ENCODE measurements at regions of chr1 and their contacts with region 1.

Region 1: DNA sequence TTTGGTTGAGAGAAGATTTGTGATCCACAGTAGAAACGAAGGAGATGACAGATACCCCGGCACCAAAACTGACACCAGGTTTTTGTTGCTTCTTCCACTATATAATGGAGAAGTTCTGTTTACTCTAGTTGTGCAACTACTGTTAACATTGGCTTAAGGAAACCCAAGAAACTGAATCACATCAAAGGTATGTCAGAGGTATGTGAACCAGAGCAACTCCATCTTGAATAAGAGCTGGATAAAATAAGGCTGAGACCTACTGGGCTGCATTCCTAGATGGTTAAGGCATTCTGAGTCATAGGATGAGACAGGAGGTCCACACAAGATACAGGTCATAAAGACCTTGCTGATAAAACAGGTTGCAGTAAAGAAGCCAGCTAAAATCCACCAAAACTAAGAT is 173.7 kb upstream of the CAMK1G start:
- DNase-seq: peak; percentile 95
- ATAC-seq: peak; percentile 65
- H3K4me3 ChIP-seq: no peak overlapping the region
- H3K27ac ChIP-seq: no peak overlapping the region
- H3K4me1 ChIP-seq: peaks cover 14% of the 10 kb centered on the region
- H3K27me3 ChIP-seq: no peaks in the 10 kb centered on the region
- CTCF ChIP-seq: no peak
- POLR2A ChIP-seq: no peak
- RAD21 ChIP-seq: no peak

Region 2: GRCh38 chr1:209354111-209354839 is 55.5 kb before region 1 on chr1:
- CTCF ChIA-PET with region 1: interaction called, 3 read pairs
- POLR2A ChIA-PET with region 1: no interaction called
- dilution Hi-C with region 1: no loop called
- in situ Hi-C with region 1: no loop called
- intact Hi-C with region 1: loop called (anchors 1 kb)
- DNase-seq: peak; percentile 92
- ATAC-seq: peak; percentile 97
- H3K4me3 ChIP-seq: no peak overlapping the region
- H3K27ac ChIP-seq: no peak overlapping the region
- H3K4me1 ChIP-seq: no peaks in the 10 kb centered on the region
- H3K27me3 ChIP-seq: no peaks in the 10 kb centered on the region
- CTCF ChIP-seq: peak; percentile 84
- POLR2A ChIP-seq: no peak
- RAD21 ChIP-seq: peak; percentile 81

Measured in IMR-90 (cell line).